Panc1 (cell line): ENCODE measurements at regions of chr10 and their contacts with region 1.

Region 1: DNA sequence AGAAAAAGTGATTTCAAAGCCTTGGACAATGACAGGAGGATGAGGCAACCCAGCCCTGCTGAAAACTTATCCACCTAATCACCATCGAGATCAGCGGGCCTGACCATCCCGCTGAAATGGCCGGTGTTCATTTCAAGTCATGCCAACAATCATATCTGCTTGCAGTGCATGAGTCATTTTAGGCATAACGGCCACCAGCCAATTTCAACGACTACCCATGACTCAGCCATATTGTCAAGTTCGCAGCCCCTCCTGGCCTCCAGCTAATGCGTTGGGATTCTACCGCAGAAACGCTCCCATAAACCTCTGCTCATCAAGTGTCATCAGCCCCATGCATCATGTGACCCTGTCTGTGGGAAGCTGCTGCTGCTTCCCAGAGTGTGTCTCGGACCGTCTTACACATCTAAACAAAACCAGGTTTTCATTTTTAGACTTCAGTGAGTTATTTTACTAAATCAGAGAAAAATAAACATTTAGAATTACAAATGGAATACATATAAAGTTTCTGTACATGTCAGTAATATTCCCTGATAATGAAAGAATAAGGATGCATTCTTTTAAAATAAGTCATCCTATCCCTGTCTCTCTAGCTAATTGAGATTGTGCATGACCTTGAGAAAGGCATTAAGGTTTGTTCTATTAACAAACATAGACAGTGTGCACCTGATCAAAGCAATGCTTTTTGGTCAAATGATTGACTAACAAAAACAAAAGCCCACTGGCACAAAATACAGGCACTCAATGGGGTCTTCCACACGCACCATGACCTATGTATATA is 188.9 kb downstream of the ADAM12 start:
- DNase-seq: no peak
- ATAC-seq: peak; percentile 84
- H3K4me3 ChIP-seq: no peak overlapping the region
- H3K27ac ChIP-seq: no peak overlapping the region; the same call in 1 of the 2 replicates
- H3K4me1 ChIP-seq: peaks cover 4% of the 10 kb centered on the region; the same call in 1 of the 2 replicates
- H3K27me3 ChIP-seq: no peaks in the 10 kb centered on the region
- CTCF ChIP-seq: no peak

Region 2: GRCh38 chr10:126270111-126270510 is 70.7 kb after region 1 on chr10:
- CTCF ChIA-PET with region 1: no interaction called
- POLR2A ChIA-PET with region 1: no interaction called
- in situ Hi-C with region 1: no loop called
- intact Hi-C with region 1: no loop called
- DNase-seq: no peak
- ATAC-seq: no peak
- H3K4me3 ChIP-seq: no peak overlapping the region
- H3K27ac ChIP-seq: no peak overlapping the region
- H3K4me1 ChIP-seq: no peaks in the 10 kb centered on the region
- H3K27me3 ChIP-seq: no peaks in the 10 kb centered on the region
- CTCF ChIP-seq: no peak

Region 3: GRCh38 chr10:126904819-126905686 is 705.6 kb after region 1 on chr10 and contains the start of gene DOCK1:
- CTCF ChIA-PET with region 1: no interaction called
- POLR2A ChIA-PET with region 1: interaction called, 12 read pairs
- in situ Hi-C with region 1: no loop called
- intact Hi-C with region 1: no loop called
- DNase-seq: no peak
- ATAC-seq: peak; percentile 95
- H3K4me3 ChIP-seq: peak within 1 kb of the TSS; percentile 79 to 84
- H3K27ac ChIP-seq: peak within 1 kb of the TSS; percentile 83
- H3K4me1 ChIP-seq: peaks cover 27% of the 10 kb centered on the region
- H3K27me3 ChIP-seq: no peaks in the 10 kb centered on the region
- CTCF ChIP-seq: no peak
- total RNA-seq, gene DOCK1: 67.6 TPM